GM12878 (cell line): ENCODE measurements at regions of chr14 and their contacts with region 1.

Region 1: DNA sequence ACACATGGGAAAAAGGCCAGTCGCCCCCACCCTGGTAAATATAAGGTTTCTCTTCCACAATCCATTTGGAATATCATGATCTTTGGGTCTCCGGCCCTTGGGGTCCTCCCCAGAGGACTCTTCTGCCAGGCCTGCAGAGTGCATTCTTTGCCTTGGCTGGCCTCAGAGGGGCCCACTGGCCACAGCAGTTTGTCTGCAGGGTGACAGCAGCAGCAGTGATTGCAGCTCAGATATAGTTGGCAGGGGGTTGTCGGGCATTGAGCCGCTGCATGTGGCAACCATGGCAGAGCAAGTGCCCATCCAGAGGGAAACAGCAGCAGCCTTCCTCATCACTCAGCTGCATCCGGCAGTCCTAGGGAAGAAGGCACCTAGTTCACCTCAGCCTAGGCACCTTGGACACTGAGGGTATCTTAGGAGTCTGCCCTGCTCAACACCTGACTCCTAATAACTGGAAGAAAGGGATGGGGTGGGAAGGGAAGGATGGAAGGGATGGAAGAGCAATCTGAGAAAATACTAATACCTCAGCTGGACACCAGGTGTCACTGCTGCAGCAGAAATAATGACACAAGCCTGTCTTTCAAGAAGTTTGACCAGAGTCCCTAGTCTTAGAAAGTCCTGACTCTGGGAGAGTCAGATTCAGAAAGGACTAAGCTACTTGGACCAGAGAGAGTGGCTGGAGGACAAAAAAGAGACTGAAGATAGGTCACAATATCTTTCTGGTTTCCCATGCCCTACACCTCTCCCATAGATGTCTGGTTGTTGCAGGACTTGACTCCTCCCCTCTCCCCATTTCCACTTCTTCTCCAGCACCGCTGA is 8.9 kb downstream of the AJUBA start:
- DNase-seq: no peak
- ATAC-seq: peak; percentile 85
- H3K4me3 ChIP-seq: no peak overlapping the region
- H3K27ac ChIP-seq: no peak overlapping the region
- H3K4me1 ChIP-seq: no peaks in the 10 kb centered on the region
- H3K27me3 ChIP-seq: no peaks in the 10 kb centered on the region
- CTCF ChIP-seq: peak; percentile 65 to 82 (median 70)
- EP300 ChIP-seq: no peak
- POLR2A ChIP-seq: no peak
- RAD21 ChIP-seq: peak; percentile 61

Region 2: GRCh38 chr14:22945642-22946041 is 27.8 kb before region 1 on chr14:
- CTCF ChIA-PET with region 1: interaction called, 15 read pairs
- POLR2A ChIA-PET with region 1: interaction called, 3 read pairs
- RAD21 ChIA-PET with region 1: interaction called, 3 read pairs
- SMC1A ChIA-PET with region 1: interaction called, 4 read pairs
- in situ Hi-C with region 1: no loop called
- intact Hi-C with region 1: no loop called
- DNase-seq: no peak
- ATAC-seq: no peak
- H3K4me3 ChIP-seq: no peak overlapping the region
- H3K27ac ChIP-seq: no peak overlapping the region
- H3K4me1 ChIP-seq: no peaks in the 10 kb centered on the region
- H3K27me3 ChIP-seq: no peaks in the 10 kb centered on the region
- CTCF ChIP-seq: no peak
- EP300 ChIP-seq: no peak
- POLR2A ChIP-seq: no peak
- RAD21 ChIP-seq: no peak

Region 3: DNA sequence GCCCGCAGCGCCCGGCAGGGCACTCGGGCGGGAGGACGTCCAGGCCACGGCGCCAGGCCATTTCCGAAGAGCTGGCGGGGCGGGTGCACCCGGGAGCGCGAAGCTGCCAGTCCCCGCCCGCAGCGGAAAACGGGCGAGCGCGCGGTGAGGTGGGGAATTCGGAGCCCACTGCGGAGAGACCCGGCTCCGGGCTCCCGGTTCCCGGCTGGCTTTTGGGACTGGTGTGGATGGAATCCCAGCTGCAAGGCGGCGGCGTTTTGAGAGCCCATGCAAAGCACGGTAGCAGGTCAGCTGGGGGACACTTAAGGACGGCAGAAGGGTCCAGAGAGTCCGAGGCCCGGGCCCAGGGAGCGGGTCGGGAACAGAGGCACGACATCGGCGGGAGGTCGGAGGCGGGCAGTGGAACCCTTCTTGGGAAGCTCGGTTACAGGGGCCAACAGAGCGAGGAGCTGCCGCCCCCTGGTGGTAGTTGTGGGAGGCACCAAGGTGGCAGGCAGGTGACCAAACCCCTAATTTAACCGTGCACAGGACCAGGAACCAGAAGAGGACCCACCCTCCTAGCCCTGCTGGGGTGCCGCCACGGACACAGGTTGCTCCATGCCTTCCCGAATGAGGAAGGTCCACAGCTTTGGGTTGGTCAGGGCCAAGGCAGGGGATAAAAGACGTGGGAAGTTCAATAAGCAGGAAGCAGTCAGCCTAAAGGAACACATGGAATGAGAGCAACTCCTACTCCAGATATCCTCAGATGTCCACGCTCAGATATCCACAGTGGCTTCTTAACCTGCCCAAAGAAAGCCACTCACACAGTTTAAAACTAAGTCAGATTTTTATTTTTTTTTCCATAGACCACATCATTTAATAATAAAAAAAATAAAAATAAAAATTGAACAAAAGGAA is 84.6 kb after region 1 on chr14:
- CTCF ChIA-PET with region 1: interaction called, 120 read pairs
- POLR2A ChIA-PET with region 1: interaction called, 10 read pairs
- RAD21 ChIA-PET with region 1: interaction called, 20 read pairs
- SMC1A ChIA-PET with region 1: interaction called, 19 read pairs
- in situ Hi-C with region 1: no loop called
- intact Hi-C with region 1: loop called (anchors 5 kb)
- DNase-seq: peak; percentile 40
- ATAC-seq: peak; percentile 82
- H3K4me3 ChIP-seq: peak overlapping the region; percentile 79
- H3K27ac ChIP-seq: no peak overlapping the region
- H3K4me1 ChIP-seq: peaks cover 12% of the 10 kb centered on the region
- H3K27me3 ChIP-seq: no peaks in the 10 kb centered on the region
- CTCF ChIP-seq: peak; percentile 92 to 97 (median 96); a peak in 5 of 6 replicates
- EP300 ChIP-seq: no peak
- POLR2A ChIP-seq: peak; percentile 74
- RAD21 ChIP-seq: peak; percentile 78